ENCODE measurements at regions of chr3 and their contacts with region 1.

Region 1: DNA sequence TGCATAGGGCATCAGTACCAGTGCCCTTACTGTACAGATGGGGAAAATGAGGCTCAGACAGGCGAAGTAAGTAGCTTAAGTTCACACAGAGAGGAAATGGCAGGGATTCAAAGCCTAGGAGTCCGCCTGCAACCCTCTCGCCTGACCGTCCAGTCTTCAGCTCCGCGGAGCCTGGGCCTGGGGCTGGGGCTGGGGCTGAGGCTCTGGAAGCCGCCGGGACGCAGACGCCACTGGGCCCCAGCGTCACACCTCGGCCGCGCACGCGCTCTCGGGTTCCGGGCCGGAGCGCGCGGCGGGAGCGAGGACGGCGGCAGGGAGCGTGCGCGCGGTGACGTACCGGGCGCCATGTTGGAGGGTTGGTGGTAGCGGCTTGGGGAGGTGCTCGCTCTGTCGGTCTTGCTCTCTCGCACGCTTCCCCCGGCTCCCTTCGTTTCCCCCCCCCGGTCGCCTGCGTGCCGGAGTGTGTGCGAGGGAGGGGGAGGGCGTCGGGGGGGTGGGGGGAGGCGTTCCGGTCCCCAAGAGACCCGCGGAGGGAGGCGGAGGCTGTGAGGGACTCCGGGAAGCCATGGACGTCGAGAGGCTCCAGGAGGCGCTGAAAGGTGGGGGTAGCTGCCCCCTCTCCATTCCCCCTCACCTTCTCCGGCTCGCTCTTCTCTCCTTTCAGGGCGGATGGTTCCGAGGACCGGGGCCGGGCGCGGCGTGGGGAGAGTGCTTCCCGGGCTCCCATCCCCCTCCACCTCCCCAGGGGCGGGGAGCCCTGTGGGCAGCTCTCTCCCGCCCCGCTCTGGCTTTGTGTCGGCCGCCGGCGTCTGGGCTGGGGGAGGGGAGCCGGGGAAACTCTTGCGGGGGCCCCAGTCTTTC is at the start of gene PPP4R2:
- DNase-seq: peak; percentile 89
- H3K4me3 ChIP-seq: peak within 1 kb of the TSS; percentile 93
- H3K27ac ChIP-seq: peak within 1 kb of the TSS; percentile 74
- H3K4me1 ChIP-seq: peaks cover 36% of the 10 kb centered on the region
- CTCF ChIP-seq: no peak
- total RNA-seq, gene PPP4R2: 52.0 and 63.5 TPM in 2 replicates

Region 2: GRCh38 chr3:71659864-71660591 is 1336.7 kb before region 1 on chr3:
- CTCF ChIA-PET with region 1: no interaction called
- POLR2A ChIA-PET with region 1: no interaction called
- intact Hi-C with region 1: loop called (anchors 5 kb)
- DNase-seq: peak; percentile 94
- H3K4me3 ChIP-seq: peak overlapping the region; percentile 30
- H3K27ac ChIP-seq: peak overlapping the region; percentile 92
- H3K4me1 ChIP-seq: peaks cover 56% of the 10 kb centered on the region
- CTCF ChIP-seq: no peak

Region 3: DNA sequence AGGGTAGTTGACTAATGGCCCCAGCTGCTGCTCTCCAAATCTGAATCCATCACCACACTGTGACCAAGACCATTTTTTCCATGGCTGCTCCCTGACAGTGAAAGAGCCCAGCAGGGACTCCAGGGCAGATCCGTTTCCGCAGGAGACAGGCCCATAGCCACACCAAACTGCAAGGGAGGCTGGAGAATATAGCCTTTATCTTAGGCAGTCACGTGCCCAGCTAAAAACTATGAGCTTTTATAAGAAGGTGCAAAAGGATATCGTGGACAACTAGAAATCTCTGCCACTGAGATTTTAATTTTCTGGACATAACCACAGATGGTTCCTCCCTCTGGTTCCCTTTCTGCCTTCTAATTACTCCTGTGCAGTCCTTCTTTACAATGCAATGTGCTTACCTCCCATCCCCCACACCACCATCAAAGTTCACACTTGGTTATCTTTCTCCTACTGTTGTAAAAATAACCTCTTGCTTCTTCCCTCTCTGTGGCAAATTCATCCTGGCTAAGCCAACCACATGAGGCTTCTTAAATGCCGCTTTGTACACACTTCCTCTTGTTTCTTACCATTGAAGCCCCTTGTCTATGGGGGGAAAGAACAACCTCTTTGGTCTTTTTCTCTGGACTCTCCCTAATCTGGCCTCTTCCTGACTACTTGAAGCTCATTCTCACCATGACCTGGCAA is 382.2 kb before region 1 on chr3:
- CTCF ChIA-PET with region 1: no interaction called
- POLR2A ChIA-PET with region 1: no interaction called
- intact Hi-C with region 1: no loop called
- DNase-seq: no peak
- H3K4me3 ChIP-seq: no peak overlapping the region
- H3K27ac ChIP-seq: no peak overlapping the region
- H3K4me1 ChIP-seq: no peaks in the 10 kb centered on the region
- CTCF ChIP-seq: no peak

Region 4: GRCh38 chr3:72756900-72757299 is 239.8 kb before region 1 on chr3:
- CTCF ChIA-PET with region 1: no interaction called
- POLR2A ChIA-PET with region 1: no interaction called
- intact Hi-C with region 1: loop called (anchors 10 kb)
- DNase-seq: peak; percentile 95
- H3K4me3 ChIP-seq: peak overlapping the region; percentile 56
- H3K27ac ChIP-seq: peak overlapping the region; percentile 75
- H3K4me1 ChIP-seq: peaks cover 61% of the 10 kb centered on the region
- CTCF ChIP-seq: no peak

Region 5: DNA sequence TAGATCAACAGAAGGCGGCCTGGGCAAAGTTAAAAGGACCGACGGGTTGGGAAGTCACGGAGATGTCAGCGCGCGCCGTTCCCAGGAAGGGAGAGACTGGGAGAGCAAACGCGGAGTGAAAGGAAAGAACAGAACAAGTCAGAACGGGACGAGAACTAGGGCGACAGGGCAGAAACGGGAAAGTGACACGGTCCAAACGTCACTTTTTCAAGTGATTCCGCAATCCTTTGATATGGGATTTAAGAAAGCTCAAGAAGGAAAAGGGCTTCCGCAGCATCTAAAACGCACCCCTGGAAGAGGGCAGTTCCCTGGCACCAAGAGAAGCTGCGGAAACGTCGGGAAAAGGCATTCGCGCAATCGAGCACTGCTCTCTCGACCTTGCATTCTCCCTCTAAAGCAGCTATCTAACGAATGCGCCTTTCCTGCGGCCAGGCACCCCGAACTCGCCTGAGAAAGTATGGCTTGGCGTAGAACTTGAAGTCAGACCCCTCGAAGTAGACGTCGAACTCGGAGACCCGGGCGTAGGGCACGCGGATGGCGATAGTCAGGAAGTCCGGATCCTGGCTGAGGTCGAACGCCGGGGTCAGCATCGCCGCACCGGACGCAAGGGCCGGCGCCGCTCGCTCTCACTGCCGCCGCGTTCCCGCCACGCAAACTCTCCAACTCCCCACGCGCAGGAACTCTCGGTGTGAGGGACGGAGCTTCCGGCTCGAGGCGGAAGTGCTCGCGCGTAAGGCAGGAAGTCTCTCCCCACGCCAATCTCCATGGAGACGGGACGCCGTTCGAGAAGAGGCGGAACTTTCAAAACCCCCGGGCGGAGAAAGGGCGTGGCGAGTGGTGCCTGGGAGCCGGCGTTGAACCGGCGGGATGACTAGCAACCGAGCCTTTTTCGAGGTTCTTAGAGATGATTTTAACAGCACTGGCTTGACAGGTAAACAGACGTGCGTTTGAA is 148.7 kb before region 1 on chr3 and contains the start of gene SHQ1:
- CTCF ChIA-PET with region 1: no interaction called
- POLR2A ChIA-PET with region 1: interaction called, 3 read pairs
- intact Hi-C with region 1: loop called (anchors 2 kb)
- DNase-seq: peak; percentile 96
- H3K4me3 ChIP-seq: peak within 1 kb of the TSS; percentile 83
- H3K27ac ChIP-seq: peak within 1 kb of the TSS; percentile 13
- H3K4me1 ChIP-seq: peaks cover 35% of the 10 kb centered on the region
- CTCF ChIP-seq: no peak
- total RNA-seq, gene SHQ1: 19.7 and 24.3 TPM in 2 replicates

Region 6: GRCh38 chr3:72938471-72939265 is 58.0 kb before region 1 on chr3:
- CTCF ChIA-PET with region 1: no interaction called
- POLR2A ChIA-PET with region 1: interaction called, 3 read pairs
- intact Hi-C with region 1: loop called (anchors 1 kb)
- DNase-seq: peak; percentile 59
- H3K4me3 ChIP-seq: no peak overlapping the region
- H3K27ac ChIP-seq: no peak overlapping the region
- H3K4me1 ChIP-seq: no peaks in the 10 kb centered on the region
- CTCF ChIP-seq: peak; percentile 81

Region 7: GRCh38 chr3:73007992-73008712 is 11.4 kb after region 1 on chr3:
- CTCF ChIA-PET with region 1: interaction called, 3 read pairs
- POLR2A ChIA-PET with region 1: interaction called, 10 read pairs
- intact Hi-C with region 1: no loop called
- DNase-seq: no peak
- H3K4me3 ChIP-seq: no peak overlapping the region
- H3K27ac ChIP-seq: no peak overlapping the region
- H3K4me1 ChIP-seq: no peaks in the 10 kb centered on the region
- CTCF ChIP-seq: no peak

Region 8: DNA sequence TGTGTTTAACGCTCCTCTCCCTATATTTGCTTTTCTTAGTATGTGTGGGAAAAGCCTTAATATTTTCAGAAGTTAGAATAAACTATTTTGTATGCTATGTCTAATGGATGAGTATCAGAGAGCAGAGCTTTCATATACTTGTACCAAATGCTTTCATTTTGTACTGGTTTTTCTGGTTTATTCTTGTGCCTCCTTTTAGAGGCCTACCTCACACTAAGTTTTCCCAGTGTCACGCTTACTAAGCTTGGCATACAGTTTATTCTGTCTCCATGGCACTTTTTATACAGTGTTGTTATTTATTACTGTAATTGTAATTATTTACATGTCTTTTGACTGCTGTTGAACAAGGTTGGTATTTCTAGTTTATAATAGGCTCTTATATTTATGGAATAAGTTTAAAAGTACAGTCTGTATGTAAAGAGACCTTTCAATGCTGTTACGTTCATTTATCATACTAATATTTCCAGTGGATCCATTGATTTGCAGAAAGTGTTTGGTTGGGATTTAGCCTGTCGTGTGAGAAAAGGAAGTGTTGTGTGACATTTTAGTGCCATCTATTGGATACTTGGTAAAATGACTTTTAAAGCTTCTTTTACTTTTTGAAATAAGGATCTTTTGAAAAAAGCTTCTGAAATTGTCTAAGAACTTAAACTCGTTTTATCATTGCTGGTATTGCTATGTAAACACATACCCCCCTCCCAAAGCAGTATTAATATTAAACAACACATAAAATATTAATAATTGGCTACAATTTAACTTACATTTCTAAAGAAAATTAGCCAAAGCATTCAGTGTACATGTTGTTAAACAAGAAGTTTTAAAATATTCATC is 59.5 kb after region 1 on chr3:
- CTCF ChIA-PET with region 1: interaction called, 3 read pairs
- POLR2A ChIA-PET with region 1: interaction called, 5 read pairs
- intact Hi-C with region 1: loop called (anchors 5 kb)
- DNase-seq: peak; percentile 16
- H3K4me3 ChIP-seq: no peak overlapping the region
- H3K27ac ChIP-seq: no peak overlapping the region
- H3K4me1 ChIP-seq: no peaks in the 10 kb centered on the region
- CTCF ChIP-seq: peak; percentile 81